A549 (cell line): ENCODE measurements at regions of chr19 and their contacts with region 1.

Region 1: GRCh38 chr19:39435499-39436349 is at the start of gene RPS16:
- DNase-seq: peak; percentile 95 to 100
- ATAC-seq: peak; percentile 80 to 88
- H3K4me3 ChIP-seq: peak within 1 kb of the TSS; percentile 80
- H3K27ac ChIP-seq: peak within 1 kb of the TSS; percentile 90 to 95
- H3K4me1 ChIP-seq: peaks cover 71% of the 10 kb centered on the region
- CTCF ChIP-seq: no peak
- EP300 ChIP-seq: no peak
- POLR2A ChIP-seq: peak; percentile 92
- RAD21 ChIP-seq: no peak
- polyA plus RNA-seq, gene RPS16: 4,855 and 5,722 TPM in 2 replicates

Region 2: DNA sequence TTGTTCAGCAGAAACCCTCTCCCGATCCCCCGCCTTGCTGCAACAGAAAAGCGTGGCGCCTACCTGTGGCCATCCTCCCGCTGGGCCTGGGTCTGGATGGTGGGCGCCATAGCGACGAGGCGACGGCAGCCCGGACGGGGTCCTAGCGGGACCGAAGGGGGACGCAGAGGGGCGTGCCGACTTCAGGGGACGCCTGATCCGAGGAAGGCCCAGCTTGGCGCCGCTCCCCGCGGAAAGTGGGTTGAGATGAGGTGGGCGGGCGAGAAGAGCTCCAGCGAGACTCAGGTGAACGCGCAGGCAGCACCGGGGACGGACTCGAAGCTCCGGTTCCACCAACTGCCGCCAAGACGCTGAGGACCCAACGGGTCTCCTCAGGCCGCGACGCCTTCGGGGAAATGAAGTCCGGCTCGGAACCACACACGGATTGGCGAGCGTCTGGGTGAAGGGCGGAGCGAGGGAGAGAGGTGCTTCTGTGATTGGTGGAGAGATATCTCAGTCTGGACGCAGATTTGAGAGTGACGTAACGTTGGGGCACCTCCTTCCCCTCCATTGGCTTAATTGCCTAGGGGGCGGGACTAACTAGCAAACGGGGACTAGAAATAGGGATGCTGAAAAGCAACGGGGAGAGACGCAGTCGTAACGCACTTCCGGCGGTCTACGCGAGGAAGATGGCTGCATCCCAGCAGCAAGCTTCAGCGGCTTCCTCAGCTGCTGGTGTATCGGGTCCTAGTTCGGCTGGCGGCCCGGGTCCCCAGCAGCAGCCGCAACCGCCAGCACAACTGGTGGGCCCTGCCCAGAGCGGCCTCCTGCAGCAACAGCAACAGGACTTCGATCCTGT is 44.8 kb before region 1 on chr19 and contains the starts of genes MED29 and PAF1:
- CTCF ChIA-PET with region 1: interaction called, 457 read pairs
- POLR2A ChIA-PET with region 1: interaction called, 62 read pairs
- DNase-seq: peak; percentile 100
- ATAC-seq: peak; percentile 91 to 97
- H3K4me3 ChIP-seq: peak within 1 kb of the TSS; percentile 68
- H3K27ac ChIP-seq: peak within 1 kb of the TSS; percentile 89 to 90
- H3K4me1 ChIP-seq: peaks cover 15% of the 10 kb centered on the region; the same call in 2 of the 3 replicates
- CTCF ChIP-seq: no peak
- EP300 ChIP-seq: no peak
- POLR2A ChIP-seq: peak; percentile 99
- RAD21 ChIP-seq: no peak; a peak in 1 of 5 replicates
- polyA plus RNA-seq, gene MED29: 55.7 and 57.5 TPM in 2 replicates
- polyA plus RNA-seq, gene PAF1: 73.0 and 103 TPM in 2 replicates

Region 3: DNA sequence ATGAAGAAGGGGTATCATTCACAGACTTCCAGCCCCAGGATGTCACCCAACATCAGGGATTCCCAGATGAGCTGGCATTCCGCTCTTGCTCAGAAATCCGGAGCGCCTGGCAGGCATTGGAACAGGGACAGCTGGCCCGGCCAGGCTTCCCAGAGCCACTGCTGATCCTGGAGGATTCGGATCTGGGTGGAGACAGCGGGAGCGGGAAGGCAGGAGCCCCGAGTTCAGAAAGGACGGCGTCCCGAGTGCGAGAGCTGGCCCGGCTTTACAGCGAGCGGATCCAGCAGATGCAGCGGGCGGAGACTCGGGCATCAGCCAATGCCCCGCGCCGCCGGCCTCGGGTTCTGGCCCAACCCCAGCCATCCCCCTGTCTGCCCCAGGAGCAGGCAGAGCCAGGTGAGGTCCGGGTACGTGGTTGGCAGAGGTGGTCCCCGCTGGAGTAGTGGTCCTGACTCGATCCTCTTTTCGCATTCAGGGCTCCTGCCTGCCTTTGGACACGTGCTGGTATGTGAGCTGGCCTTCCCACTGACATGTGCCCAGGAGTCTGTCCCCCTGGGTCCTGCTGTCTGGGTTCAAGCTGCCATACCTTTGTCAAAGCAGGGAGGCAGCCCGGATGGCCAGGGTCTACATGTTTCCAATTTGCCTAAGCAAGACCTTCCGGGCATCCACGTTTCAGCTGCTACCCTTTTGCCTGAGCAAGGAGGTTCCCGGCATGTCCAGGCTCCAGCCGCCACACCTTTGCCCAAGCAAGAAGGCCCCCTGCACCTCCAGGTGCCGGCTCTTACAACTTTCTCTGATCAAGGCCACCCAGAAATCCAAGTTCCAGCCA is 12.3 kb before region 1 on chr19:
- CTCF ChIA-PET with region 1: interaction called, 36 read pairs
- POLR2A ChIA-PET with region 1: interaction called, 160 read pairs
- DNase-seq: no peak
- ATAC-seq: 0 out of 6 replicates have a peak, but pooled peaks of 1 of the 2 experiments have one; percentile 1
- H3K4me3 ChIP-seq: no peak overlapping the region
- H3K27ac ChIP-seq: no peak overlapping the region
- H3K4me1 ChIP-seq: peaks cover 12% of the 10 kb centered on the region
- CTCF ChIP-seq: no peak
- EP300 ChIP-seq: no peak
- POLR2A ChIP-seq: no peak
- RAD21 ChIP-seq: no peak

Region 4: DNA sequence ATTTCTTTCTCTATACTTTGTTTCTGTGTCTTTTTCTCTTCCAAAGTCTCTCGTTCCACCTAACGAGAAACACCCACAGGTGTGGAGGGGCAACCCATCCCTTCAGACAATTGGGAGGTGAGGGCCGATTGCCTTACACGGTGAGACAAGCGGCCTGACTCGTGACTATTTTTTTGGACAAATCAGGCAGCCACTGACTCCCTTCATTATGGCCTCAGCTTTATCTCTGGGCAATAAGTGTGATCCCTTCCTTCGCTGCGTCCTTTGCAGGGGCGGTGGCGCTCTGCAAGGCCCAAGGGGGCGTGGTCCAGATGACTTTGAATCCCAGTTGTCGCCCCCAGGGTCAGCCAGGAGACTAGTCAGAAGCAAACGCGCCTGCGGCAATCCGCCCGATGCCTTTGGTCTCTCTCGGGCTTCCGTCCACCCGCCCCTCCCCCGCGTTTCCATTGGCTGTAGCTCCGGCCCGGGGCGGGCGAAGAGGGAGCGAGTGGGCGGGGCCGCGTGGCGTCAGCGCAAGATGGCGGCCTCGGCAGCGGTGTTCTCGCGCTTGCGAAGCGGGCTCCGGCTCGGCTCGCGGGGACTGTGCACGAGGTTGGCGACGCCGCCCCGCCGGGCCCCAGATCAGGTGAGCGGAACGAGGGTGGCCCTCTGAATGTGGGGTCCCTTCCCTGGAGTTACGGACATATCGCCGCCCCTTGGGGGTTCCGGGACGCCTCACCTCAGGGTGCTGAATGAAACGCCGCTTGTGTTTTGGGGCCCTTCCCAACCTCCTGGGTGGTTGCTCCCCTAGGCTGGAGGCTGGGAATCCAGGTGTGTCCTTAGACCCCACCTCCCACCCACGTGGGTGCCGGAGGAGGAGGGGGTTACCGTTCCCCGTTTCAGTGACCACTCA is 44.9 kb after region 1 on chr19 and contains the start of gene TIMM50:
- CTCF ChIA-PET with region 1: interaction called, 73 read pairs
- POLR2A ChIA-PET with region 1: interaction called, 30 read pairs
- DNase-seq: peak; percentile 97
- ATAC-seq: peak; percentile 91 to 96
- H3K4me3 ChIP-seq: peak within 1 kb of the TSS; percentile 70
- H3K27ac ChIP-seq: peak within 1 kb of the TSS; percentile 86 to 92
- H3K4me1 ChIP-seq: peaks cover 15% of the 10 kb centered on the region
- CTCF ChIP-seq: no peak
- EP300 ChIP-seq: no peak
- POLR2A ChIP-seq: peak; percentile 93
- RAD21 ChIP-seq: no peak
- polyA plus RNA-seq, gene TIMM50: 234 and 246 TPM in 2 replicates

Region 5: DNA sequence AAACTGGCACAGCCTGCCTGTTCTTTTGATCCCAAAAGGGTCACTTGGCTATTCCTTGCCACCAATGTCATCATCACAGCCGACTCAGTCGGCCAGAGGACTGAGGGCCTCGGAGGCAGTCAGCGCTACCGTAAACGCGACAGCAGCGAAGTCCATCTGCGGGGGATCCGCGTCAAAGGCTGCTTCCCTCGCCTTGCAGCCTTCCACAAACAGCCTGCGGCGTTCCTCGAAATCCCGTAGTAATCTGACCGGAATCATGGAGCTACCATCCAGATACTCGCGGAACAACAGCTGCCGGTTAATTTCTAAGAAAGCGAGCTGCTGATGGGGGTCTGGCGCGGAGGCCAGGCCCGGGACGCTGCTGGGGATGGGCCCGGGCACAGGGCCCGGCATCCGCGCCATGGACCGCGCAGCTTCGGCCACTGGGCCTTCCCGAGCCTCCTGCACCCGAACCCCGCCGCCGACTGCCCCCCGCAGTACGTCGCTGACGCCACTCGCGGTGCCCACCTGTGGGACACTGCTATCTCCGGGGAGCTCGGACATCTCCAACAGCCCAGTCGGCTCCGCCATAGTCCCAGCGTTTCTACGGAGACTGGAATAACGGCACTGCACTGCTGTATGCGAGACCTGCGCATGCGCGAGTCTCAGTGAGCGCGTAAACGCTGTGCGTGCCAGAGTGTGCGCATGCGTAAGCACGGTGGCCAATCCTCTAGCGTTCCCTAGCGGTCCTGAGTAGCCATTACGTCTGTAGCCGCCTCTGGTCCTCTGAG is 96.7 kb after region 1 on chr19 and contains the start of gene EID2B:
- CTCF ChIA-PET with region 1: interaction called, 279 read pairs
- POLR2A ChIA-PET with region 1: interaction called, 40 read pairs
- DNase-seq: peak; percentile 99 to 100
- ATAC-seq: peak; percentile 95 to 96
- H3K4me3 ChIP-seq: peak within 1 kb of the TSS; percentile 68
- H3K27ac ChIP-seq: peak within 1 kb of the TSS; percentile 83 to 88
- H3K4me1 ChIP-seq: peaks cover 14% of the 10 kb centered on the region
- CTCF ChIP-seq: peak; percentile 100
- EP300 ChIP-seq: no peak
- POLR2A ChIP-seq: peak; percentile 96
- RAD21 ChIP-seq: peak; percentile 100
- polyA plus RNA-seq, gene EID2B: 9.4 and 10.9 TPM in 2 replicates

Region 6: GRCh38 chr19:39671738-39672363 is 236.1 kb after region 1 on chr19:
- CTCF ChIA-PET with region 1: interaction called, 80 read pairs
- POLR2A ChIA-PET with region 1: interaction called, 11 read pairs
- DNase-seq: peak; percentile 69 to 83
- ATAC-seq: peak; percentile 95 to 98
- H3K4me3 ChIP-seq: no peak overlapping the region
- H3K27ac ChIP-seq: no peak overlapping the region
- H3K4me1 ChIP-seq: peaks cover 5% of the 10 kb centered on the region; the same call in 1 of the 3 replicates
- CTCF ChIP-seq: peak; percentile 99
- EP300 ChIP-seq: no peak
- POLR2A ChIP-seq: no peak
- RAD21 ChIP-seq: peak; percentile 99 to 100